Heart left ventricle (tissue), 16 donors: ENCODE measurements at regions of chr16 and their contacts with region 1.

Region 1: GRCh38 chr16:24235806-24236205 is 20.3 kb upstream of the CACNG3 start:
- DNase-seq: no peak
- ATAC-seq: no peak
- H3K4me3 ChIP-seq: no peak overlapping the region
- H3K27ac ChIP-seq: no peak overlapping the region
- H3K4me1 ChIP-seq: no peaks in the 10 kb centered on the region
- H3K27me3 ChIP-seq: peaks cover 0 to 6% (median 0%) of the 10 kb centered on the region in 9 donors
- CTCF ChIP-seq: no peak
- POLR2A ChIP-seq: no peak

Region 2: DNA sequence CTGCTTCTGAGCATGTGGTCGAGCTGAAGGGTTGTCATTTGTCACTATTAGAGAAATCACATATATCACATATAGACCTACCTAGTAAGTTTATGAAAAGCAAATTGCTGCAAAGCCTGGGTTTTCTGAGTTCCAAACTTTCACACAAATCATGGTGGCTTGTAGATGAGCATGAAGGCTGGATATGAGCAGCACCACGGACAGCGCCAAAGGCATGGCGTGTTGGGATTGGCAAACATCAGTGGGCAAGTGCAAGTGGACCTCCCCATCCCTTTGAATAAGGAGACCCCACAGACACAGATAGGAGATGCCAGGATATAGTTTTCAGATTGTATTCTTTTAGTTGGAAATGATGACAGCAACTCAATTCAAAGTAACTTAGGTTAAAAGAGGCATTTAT is 57.3 kb before region 1 on chr16:
- intact Hi-C with region 1: loop called in 1 of 10 experiments (anchors 10 kb)
- DNase-seq: no peak
- ATAC-seq: no peak
- H3K4me3 ChIP-seq: no peak overlapping the region
- H3K27ac ChIP-seq: no peak overlapping the region
- H3K4me1 ChIP-seq: no peaks in the 10 kb centered on the region
- H3K27me3 ChIP-seq: no peaks in the 10 kb centered on the region
- CTCF ChIP-seq: no peak
- POLR2A ChIP-seq: no peak